ENCODE measurements at regions of chr12 and their contacts with region 1.

Region 1: GRCh38 chr12:96471368-96472050 is 17.9 kb upstream of the CFAP54 start:
- DNase-seq: no peak

Region 2: DNA sequence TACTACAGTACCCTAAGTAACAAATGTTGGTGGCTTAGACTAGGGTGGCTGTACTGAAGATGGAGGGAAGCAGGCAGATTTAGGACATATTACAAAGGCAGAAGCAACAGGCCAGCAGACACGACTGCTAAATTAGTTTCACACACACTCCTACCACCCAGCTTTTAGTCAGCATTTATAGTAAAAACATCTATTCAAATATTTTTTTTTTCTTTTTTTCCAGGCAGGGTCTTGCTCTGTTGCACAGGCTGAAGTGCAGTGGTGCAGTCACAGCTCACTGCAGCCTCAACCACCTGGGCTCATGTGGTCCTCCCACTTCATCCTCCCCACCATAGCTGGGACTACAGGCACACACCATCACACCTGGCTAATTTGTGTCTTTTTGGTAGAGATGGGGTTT is 144.2 kb before region 1 on chr12:
- intact Hi-C with region 1: no loop called
- DNase-seq: no peak

Region 3: GRCh38 chr12:96526110-96526509 is 54.6 kb after region 1 on chr12:
- intact Hi-C with region 1: no loop called
- DNase-seq: no peak

Region 4: DNA sequence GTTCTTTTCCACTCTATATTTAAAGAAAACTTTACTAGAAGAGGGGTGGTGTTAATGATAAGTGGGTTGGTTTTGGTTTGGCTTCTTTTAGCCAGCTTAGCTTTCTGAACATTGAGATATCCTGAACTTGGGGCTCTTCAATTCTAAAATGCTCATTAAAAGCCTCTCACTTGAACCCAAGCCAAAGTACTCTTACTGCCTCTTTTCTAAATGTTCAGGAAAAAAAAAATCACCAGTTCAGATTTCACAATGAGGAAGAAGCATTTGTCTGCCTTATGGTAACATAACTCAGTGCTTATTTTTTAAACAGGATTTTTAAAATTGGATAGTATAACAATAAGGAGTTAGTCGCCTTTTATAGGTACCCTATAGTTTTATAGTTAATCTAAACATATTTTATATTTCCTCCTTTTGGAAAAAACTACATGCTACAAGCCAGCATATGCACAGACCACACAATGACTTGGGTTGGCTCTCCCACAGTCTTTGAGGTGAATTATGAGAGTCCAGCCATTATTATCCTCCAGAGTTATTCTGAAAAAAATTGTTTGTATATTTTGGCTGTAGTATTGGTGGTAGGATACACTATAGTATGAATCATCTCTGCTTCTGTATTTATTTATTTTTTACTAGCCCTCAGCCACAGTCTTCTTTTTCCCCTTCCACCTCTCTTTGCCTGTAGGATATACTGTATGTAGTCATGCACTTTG is 1848.4 kb after region 1 on chr12:
- intact Hi-C with region 1: loop called in 1 of 2 experiments (anchors 5 kb)
- DNase-seq: no peak

Measured in posterior vena cava (tissue), 2 donors.